Activated CD4-positive, alpha-beta memory T cell treated with anti-CD3 and anti-CD28 coated beads for 36 hours (primary cell): ENCODE measurements at regions of chr17 and their contacts with region 1.

Region 1: GRCh38 chr17:4733073-4733531 is 1.9 kb downstream of the MED11 start:
- DNase-seq: no peak
- H3K4me3 Mint-ChIP-seq: peak overlapping the region; percentile 20
- H3K27ac Mint-ChIP-seq: no peak overlapping the region
- H3K4me1 Mint-ChIP-seq: peaks cover 29% of the 10 kb centered on the region
- H3K27me3 Mint-ChIP-seq: peaks cover under 1% of the 10 kb centered on the region

Region 2: GRCh38 chr17:4696437-4696805 is 36.7 kb before region 1 on chr17:
- CTCF ChIA-PET with region 1: no interaction called
- POLR2A ChIA-PET with region 1: no interaction called
- intact Hi-C with region 1: loop called (anchors 1 kb)
- DNase-seq: peak; percentile 52
- H3K4me3 Mint-ChIP-seq: peak overlapping the region; percentile 21
- H3K27ac Mint-ChIP-seq: peak overlapping the region; percentile 88
- H3K4me1 Mint-ChIP-seq: peaks cover 55% of the 10 kb centered on the region
- H3K27me3 Mint-ChIP-seq: no peaks in the 10 kb centered on the region

Region 3: GRCh38 chr17:4747847-4748246 is 14.7 kb after region 1 on chr17:
- CTCF ChIA-PET with region 1: no interaction called
- POLR2A ChIA-PET with region 1: no interaction called
- intact Hi-C with region 1: loop called (anchors 1 kb)
- DNase-seq: peak; percentile 49
- H3K4me3 Mint-ChIP-seq: peak overlapping the region; percentile 17
- H3K27ac Mint-ChIP-seq: no peak overlapping the region
- H3K4me1 Mint-ChIP-seq: peaks cover 11% of the 10 kb centered on the region
- H3K27me3 Mint-ChIP-seq: peaks cover 8% of the 10 kb centered on the region